ENCODE measurements at regions of chr3 and their contacts with region 1.

Region 1: DNA sequence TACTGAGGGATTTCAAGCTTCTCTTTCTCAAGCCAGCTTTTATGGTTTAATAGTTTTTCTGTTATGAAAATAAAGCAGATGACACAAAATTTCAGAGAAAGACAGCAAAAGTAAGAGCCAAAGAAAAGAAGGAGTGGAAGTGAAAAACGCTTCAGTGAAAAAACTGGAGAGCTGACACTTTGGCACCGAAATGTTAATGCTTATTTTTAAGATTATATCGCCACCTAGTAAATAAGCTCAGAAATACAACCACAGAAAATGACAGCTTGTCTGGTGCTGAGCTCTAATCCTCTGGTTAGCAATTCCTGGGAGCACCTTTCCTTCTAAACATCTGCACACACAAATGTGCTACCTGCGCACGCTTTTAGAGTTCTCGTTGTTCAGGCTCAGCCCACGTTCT is 101.6 kb downstream of the ZPLD1 start:
- ATAC-seq: peak; percentile 47 to 70 (median 56)
- H3K4me3 ChIP-seq: no peak overlapping the region
- H3K27ac ChIP-seq: no peak overlapping the region
- H3K4me1 ChIP-seq: no peaks in the 10 kb centered on the region

Region 2: DNA sequence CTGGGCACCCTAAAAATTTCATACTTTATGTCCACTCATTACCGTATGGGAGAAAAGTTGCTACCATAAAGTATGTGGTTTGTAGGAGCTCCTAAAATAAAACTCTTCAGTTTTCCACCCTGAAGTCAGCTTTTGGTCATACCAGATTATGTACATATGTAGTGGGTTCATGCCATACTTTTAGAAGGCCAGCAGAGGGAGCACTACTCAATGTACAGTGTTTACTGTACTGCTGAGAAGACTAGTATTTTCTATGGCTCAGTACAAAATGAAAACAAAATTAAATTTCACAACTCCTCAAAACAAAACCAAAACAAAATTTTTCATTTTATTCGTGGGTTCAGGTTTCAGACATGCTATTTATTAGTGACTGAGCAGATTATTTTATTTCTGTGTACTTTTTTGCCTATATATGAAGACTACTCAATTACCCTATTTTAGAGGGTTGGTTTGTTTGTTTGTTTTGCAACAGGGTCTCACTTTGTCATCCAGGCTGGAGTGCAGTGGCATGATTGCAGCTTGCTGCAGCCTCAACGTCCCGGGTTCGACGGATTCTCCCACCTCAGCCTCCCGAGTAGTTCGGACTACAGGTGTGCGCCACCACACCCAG is 733.2 kb before region 1 on chr3:
- in situ Hi-C with region 1: loop called in 4 of 9 experiments (anchors 25 kb)
- ATAC-seq: peak; percentile 65 to 100 (median 91)
- H3K4me3 ChIP-seq: no peak overlapping the region
- H3K27ac ChIP-seq: no peak overlapping the region
- H3K4me1 ChIP-seq: no peaks in the 10 kb centered on the region

Region 3: DNA sequence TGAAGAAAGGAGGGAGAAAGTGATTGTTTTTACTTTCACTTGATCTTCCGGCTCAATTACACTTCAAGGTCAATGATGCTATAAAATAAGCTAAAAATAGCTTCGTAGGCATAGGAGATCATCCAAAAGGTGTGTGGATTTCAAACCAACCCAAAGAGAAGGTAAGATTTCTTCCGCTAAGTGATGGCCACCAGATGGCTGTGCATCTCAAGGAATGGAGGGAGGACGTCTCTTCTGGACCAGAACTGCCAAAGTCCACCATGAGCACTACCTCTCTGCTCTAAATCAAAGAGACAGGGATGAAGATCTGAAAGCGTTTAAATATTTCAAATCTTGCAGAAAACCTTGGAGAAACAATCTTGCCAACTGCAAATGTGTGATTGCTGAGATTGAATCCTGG is 300.8 kb before region 1 on chr3:
- in situ Hi-C with region 1: loop called in 6 of 9 experiments (anchors 10 to 25 kb)
- ATAC-seq: peak in 3 of 8 experiments; percentile 45 to 60 (median 51)
- H3K4me3 ChIP-seq: no peak overlapping the region
- H3K27ac ChIP-seq: no peak overlapping the region
- H3K4me1 ChIP-seq: peaks cover 0 to 4% of the 10 kb centered on the region in 2 donors

Region 4: DNA sequence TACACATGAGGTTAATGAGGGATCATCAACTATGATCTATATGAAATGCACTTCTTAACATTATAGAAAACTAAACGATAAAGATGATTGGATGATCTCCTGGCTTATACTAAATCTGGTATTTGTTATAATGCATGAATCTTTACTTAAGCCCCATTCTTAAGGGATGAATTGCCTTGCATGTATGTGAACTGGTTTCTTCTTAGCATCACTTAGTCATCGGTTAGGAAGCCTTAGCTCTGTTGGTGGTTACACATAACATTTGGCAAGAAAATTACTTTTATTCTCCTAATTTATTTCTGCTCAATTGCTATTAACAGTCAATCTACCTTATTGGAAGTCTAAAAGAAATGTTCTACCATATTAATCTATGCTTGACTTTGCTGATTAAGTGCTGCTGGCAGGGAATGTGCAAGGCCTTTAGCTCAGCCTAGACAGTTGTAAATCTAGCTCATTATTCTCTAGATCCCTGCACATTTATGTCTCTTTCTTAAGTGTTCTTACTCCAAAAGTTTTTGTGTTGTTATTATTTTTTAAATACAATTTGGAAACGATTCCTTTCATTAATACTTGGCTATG is 254.4 kb after region 1 on chr3:
- in situ Hi-C with region 1: no loop called
- ATAC-seq: peak in 2 of 8 experiments; percentile 69 to 82
- H3K4me3 ChIP-seq: no peak overlapping the region
- H3K27ac ChIP-seq: no peak overlapping the region
- H3K4me1 ChIP-seq: peaks cover 0 to 5% of the 10 kb centered on the region in 2 donors

Measured in motor neuron (in vitro differentiated cells).